Common myeloid progenitor, CD34-positive (primary cell): ENCODE measurements at regions of chr17 and their contacts with region 1.

Region 1: DNA sequence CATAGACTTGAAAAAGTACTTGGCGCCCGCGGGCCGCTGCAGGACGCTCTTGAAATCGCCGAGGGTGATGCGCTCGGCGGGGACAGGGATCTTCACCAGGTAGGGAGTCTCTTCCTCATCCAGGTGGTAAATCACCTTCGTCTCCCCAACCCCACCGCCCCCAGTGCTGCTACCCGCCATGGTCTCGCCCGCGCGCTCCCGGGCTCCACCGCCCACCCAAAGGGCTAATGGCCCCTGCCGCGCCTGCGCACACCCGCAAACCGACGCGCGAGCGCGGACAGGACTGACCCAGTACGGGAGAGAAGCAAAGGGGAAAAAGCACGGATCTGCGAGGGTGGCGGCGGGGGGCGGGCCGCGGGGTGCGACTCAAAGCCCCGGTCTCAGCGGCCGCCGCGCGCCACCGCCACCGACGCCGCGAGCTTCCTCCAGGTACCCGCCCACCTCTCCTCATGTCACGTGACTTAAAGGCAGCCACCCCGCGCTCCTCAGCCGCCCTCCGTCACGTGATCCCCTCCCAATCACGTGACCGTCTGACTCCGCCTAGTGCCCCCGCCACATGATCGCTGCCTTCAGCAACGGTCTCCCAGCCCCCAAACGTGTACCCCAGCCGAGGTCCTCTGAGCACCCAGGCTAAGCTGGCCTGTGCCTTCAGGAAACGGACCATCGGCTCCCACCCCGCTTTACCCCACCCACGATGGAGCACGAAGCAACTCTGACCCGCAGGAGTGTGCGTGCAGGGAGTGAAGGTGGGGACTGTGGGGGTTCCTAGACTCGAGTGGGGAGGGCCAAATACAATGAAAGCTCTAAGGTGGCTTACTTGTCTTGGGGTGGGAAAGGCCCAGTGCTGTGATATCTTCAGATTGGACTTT is at the start of gene DVL2:
- DNase-seq: peak; percentile 94 to 97 (median 97)
- H3K4me3 ChIP-seq: peak within 1 kb of the TSS; percentile 70 to 97 (median 87)
- H3K27ac ChIP-seq: peak within 1 kb of the TSS; percentile 74 to 89
- H3K4me1 ChIP-seq: peaks cover 5 to 53% (median 38%) of the 10 kb centered on the region in 4 experiments
- H3K27me3 ChIP-seq: no peaks in the 10 kb centered on the region

Region 2: DNA sequence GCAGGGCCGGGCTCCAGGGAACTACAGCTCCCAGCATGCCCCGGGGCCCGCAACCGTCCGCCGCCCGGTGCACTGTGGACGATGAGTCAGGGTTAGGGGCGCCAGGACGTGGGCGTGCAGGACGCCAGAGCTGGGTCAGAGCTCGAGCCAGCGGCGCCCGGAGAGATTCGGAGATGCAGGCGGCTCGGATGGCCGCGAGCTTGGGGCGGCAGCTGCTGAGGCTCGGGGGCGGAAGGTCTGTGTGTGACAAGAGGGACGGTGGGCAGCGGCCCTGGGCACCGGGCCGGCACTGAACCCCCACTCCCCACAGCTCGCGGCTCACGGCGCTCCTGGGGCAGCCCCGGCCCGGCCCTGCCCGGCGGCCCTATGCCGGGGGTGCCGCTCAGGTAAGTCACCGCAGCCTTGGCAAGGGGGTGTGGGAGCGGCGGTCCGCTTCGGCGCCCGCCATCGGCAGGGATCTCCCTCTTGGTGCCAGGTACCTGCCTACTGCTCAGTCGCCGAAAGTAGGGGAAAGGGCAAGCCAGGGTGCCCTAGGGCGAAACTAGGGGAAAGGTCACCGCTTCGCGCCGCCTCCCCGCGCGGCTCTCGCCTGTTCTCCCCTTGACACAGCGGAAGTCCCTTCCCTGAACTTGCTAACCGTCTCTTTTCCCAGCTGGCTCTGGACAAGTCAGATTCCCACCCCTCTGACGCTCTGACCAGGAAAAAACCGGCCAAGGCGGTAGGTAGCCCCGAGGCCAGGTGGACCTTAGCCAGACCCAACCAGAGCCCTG is 14.3 kb before region 1 on chr17 and contains the starts of genes ACADVL and DLG4:
- CTCF ChIA-PET with region 1: interaction called, 75 read pairs
- POLR2A ChIA-PET with region 1: interaction called, 21 read pairs
- DNase-seq: peak; percentile 79 to 87 (median 81)
- H3K4me3 ChIP-seq: peak within 1 kb of the TSS; percentile 79 to 94 (median 87)
- H3K27ac ChIP-seq: peak within 1 kb of the TSS; percentile 58 to 76
- H3K4me1 ChIP-seq: peaks cover 5 to 58% (median 56%) of the 10 kb centered on the region in 4 experiments
- H3K27me3 ChIP-seq: no peaks in the 10 kb centered on the region